ENCODE measurements at regions of chr11 and their contacts with region 1.

Region 1: DNA sequence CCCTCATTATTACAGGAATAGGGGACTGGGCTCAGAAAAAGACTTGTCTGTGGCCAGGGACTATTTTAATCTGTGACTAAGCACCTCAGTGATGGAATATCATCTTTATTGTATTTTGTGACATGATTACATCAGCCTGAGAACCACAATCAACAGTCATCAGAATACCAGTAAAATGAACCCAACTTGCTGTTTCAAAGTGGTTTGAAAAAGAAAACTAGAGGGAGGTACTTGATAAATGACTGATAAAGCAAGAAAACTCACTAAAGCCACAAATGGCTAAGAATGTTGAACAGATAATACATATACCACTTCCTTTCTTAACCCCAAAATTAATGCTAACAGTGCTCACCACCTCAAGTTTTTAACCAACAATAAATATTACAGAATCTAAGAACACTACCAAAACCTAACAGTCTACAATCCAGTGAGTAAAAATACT is 155.7 kb downstream of the ATG16L2 start:
- DNase-seq: peak; percentile 3
- ATAC-seq: peak; percentile 87
- H3K4me3 Mint-ChIP-seq: no peak overlapping the region
- H3K27ac Mint-ChIP-seq: peak overlapping the region; percentile 79
- H3K4me1 Mint-ChIP-seq: peaks cover 34% of the 10 kb centered on the region
- H3K27me3 Mint-ChIP-seq: no peaks in the 10 kb centered on the region

Region 2: GRCh38 chr11:73019449-73019848 is 49.5 kb after region 1 on chr11:
- CTCF ChIA-PET with region 1: no interaction called
- POLR2A ChIA-PET with region 1: no interaction called
- intact Hi-C with region 1: no loop called
- DNase-seq: no peak
- ATAC-seq: no peak
- H3K4me3 Mint-ChIP-seq: no peak overlapping the region
- H3K27ac Mint-ChIP-seq: no peak overlapping the region
- H3K4me1 Mint-ChIP-seq: peaks cover 2% of the 10 kb centered on the region
- H3K27me3 Mint-ChIP-seq: no peaks in the 10 kb centered on the region

Region 3: DNA sequence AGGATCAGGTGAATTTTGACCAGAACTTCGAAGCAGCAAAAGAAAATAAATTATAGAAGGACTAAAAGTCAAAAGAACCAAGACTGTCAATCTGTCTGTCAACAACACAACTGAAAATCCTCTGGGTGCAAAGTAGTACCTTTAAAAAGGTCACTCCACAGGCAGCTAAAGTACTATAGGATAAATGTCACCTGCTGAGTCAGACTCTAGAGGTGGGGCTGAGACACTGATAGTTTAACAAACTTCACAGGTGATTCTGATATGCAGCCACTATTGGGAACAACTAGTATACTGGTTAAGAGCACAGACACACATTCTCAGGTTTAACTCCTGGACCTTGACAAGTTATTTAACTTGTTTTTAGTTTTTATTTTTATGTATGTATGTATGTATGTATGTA is 64.9 kb after region 1 on chr11:
- CTCF ChIA-PET with region 1: no interaction called
- POLR2A ChIA-PET with region 1: no interaction called
- intact Hi-C with region 1: loop called (anchors 1 kb)
- DNase-seq: peak; percentile 22
- ATAC-seq: peak; percentile 86
- H3K4me3 Mint-ChIP-seq: no peak overlapping the region
- H3K27ac Mint-ChIP-seq: peak overlapping the region; percentile 72
- H3K4me1 Mint-ChIP-seq: peaks cover 30% of the 10 kb centered on the region
- H3K27me3 Mint-ChIP-seq: no peaks in the 10 kb centered on the region

Region 4: DNA sequence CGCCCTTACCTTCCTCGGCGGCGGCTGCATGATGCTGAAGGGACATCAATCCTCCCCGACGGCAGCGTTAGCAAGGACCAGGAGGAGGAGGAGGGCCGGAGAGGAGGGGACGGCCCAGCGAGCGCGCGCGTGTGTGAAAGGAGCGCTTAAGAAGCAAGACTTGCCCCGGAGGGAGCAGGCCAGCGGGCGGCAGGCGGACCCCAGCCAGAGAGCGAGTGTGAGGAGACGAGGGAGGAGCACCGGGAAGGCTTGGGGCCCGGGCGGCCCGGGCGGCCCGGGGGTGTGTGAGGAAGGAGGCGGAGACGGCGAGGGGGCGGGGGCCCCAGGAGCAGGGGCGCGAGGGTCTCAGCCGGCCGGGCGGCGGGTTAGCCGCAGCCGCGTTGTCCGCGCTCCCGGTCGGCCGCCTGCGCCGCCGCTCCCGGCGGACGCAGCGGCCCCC is 172.0 kb after region 1 on chr11:
- CTCF ChIA-PET with region 1: interaction called, 3 read pairs
- POLR2A ChIA-PET with region 1: no interaction called
- intact Hi-C with region 1: loop called (anchors 1 to 5 kb)
- DNase-seq: peak; percentile 73
- ATAC-seq: peak; percentile 17
- H3K4me3 Mint-ChIP-seq: peak overlapping the region; percentile 92
- H3K27ac Mint-ChIP-seq: peak overlapping the region; percentile 82
- H3K4me1 Mint-ChIP-seq: peaks cover 40% of the 10 kb centered on the region
- H3K27me3 Mint-ChIP-seq: no peaks in the 10 kb centered on the region

Region 5: GRCh38 chr11:73335204-73335923 is 365.4 kb after region 1 on chr11:
- CTCF ChIA-PET with region 1: no interaction called
- POLR2A ChIA-PET with region 1: no interaction called
- intact Hi-C with region 1: no loop called
- DNase-seq: peak; percentile 86
- ATAC-seq: peak; percentile 63
- H3K4me3 Mint-ChIP-seq: no peak overlapping the region
- H3K27ac Mint-ChIP-seq: no peak overlapping the region
- H3K4me1 Mint-ChIP-seq: no peaks in the 10 kb centered on the region
- H3K27me3 Mint-ChIP-seq: no peaks in the 10 kb centered on the region

Measured in activated CD4-positive, alpha-beta T cell treated with anti-CD3 and anti-CD28 coated beads for 36 hours (primary cell).